ENCODE measurements at regions of chr16 and their contacts with region 1.

Region 1: GRCh38 chr16:30902029-30902972 is 5.9 kb downstream of the CTF1 start:
- DNase-seq: peak; percentile 88

Region 2: DNA sequence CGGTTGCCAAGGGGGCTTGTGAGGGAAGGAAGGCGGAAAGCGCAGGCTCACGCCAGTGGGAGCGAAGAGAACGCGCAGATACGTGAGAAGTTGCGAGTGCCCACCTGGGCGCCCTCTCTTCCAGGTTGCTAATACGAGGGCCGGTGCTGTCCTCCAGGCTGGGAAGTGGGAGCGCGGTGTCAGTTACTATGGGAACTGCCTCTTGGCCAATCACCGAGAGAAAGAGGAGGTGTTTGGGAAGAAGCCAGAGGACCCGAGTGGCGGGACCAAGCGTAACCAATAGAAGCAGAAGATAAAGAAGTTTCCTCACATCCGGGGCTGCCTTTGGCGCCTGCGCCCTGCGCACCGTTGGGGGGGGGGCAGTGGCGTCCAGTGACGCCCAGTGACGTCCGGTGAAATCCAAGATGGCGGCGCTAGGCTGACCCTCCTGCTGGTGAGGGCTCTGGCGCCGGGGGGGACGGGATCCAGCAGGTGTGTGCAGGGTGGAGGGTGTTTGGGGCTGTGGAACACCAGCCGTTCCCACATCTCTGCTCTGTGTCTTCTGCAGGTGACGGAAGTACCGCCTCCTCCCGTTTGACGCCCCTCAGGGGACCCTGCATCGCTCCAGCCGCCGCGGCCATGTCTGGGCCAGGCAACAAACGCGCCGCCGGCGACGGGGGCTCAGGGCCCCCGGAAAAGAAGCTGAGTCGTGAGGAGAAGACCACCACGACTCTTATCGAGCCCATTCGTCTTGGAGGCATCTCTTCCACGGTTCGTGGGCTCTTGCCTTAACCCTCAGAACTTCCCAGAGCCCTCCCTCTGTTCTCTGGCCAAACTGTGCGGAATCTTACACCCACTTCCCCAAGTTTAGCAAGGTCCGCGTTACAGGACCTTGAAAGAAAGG is 140.1 kb before region 1 on chr16 and contains the starts of genes CFAP119 and RNF40:
- intact Hi-C with region 1: loop called (anchors 5 kb)
- DNase-seq: peak; percentile 98
- total RNA-seq, gene CFAP119: 1.0 TPM
- total RNA-seq, gene RNF40: 47.9 TPM

Region 3: DNA sequence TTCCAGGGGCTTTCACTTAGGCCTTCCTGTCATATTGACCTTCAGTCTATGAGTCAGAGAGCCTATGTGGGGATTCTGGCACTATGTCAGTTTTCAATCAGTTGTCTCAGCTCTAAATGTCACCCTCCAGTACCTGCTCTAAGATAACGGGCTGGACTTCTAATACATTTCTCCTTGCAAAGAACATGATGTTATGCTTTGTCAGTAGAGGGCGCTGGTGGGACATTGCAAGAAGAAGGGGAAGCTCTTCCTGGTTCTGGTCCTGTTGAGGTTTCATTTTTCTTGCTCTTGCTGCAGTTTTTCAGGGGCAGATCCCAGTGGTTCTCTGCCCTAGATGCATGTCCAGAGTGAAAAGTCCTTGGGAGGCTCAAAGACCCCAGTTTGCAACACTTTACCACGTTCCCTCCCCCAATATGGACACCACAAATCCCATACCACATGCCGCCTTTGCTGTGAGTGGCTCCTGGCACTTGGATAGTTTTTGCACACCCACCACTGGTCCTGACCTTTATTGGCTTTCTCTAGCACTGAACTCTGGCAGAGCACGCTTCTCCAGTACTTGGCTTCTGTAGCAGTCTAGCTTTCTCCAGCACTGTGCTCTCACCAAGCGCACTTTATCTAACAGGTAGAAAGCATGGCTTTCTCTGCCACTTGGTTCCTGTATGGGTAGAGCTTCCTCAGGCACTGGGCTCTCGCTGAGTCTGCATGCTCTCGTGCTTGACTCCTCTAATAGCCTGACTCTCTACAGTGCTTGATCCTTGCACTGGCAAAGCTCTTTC is 57.4 kb before region 1 on chr16:
- intact Hi-C with region 1: loop called (anchors 1 kb)
- DNase-seq: peak; percentile 79

Measured in cardiac septum (tissue), 1 donor.